Prostate gland (tissue), 2 donors: ENCODE measurements at regions of chr6 and their contacts with region 1.

Region 1: GRCh38 chr6:110873981-110874879 is at the start of gene AMD1:
- DNase-seq: peak; percentile 99
- H3K4me3 ChIP-seq: peak within 1 kb of the TSS; percentile 91 to 94
- H3K27ac ChIP-seq: peak within 1 kb of the TSS; percentile 96
- H3K4me1 ChIP-seq: no peaks in the 10 kb centered on the region
- H3K27me3 ChIP-seq: no peaks in the 10 kb centered on the region
- CTCF ChIP-seq: peak in 2 of 4 experiments; percentile 30 to 34
- POLR2A ChIP-seq: peak; percentile 98
- total RNA-seq, gene AMD1: 286 to 504 TPM

Region 2: DNA sequence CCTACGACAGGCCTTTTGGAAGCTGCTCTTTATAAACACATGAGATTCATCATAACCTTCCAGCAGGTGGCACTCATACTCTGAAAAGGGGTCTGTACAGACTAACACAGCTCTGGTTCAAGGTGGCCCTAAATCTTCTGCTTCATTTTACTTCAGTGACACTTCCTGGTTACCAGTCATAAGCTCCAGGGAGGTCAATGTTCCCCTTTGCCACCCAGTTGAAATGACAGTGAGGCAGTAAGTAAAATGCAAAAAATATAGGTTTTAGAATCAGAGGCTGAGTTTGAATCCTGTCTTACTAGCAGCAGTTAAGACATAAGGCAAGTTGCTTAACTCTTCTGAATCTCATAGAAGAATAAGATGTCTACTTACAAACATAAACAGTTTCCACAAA is 191.8 kb before region 1 on chr6:
- intact Hi-C with region 1: loop called (anchors 5 kb)
- DNase-seq: peak; percentile 86
- H3K4me3 ChIP-seq: no peak overlapping the region
- H3K27ac ChIP-seq: peak overlapping the region; percentile 76 to 83
- H3K4me1 ChIP-seq: no peaks in the 10 kb centered on the region
- H3K27me3 ChIP-seq: no peaks in the 10 kb centered on the region
- CTCF ChIP-seq: peak; percentile 55 to 86 (median 82)
- POLR2A ChIP-seq: no peak

Region 3: DNA sequence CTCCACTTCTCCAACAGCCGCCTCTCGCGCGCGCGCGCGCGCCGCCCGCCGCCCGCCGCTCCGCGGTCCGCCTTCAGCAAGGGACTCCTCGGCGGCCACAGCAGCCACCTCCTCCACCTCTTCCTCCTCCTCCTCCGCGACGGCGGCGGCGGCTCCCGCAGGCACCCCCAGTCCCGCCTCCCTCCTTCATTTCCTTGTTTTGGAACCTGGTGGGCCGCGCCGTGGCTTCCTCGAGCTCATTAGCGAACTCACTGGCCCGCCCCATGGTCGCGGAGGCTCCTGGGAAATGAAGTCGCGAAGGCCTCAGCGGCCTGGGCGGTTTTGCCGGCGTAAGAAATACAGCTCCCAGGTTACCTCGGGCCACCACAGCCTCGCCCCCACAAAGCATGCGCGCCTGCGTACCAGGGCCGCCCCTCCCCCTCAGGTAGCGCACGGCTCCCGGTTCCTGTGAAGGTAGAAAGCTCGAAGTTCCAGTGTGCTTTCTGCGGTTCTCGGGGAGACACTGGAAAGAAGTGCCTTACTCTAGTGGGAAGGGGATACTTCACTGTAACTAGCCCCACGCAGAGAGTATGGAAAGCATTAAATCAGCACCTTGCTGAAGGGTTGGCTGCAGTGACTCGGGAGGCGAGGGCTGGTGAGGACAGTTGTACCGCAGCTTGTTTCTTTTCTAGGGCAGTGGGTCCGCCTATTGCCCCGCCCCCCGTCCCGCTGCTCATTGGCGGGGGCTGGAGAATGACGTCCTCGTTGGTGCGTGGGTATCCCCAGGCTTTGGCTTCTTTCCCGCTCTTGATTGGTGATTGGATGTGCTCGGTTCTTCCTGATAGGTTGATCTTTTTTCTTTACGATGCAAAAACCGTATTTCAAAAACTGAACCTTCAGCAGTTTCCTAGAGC is 58.8 kb before region 1 on chr6 and contains the start of gene CDK19:
- intact Hi-C with region 1: loop called (anchors 2 kb)
- DNase-seq: peak; percentile 99
- H3K4me3 ChIP-seq: peak within 1 kb of the TSS; percentile 96
- H3K27ac ChIP-seq: peak within 1 kb of the TSS; percentile 95 to 96
- H3K4me1 ChIP-seq: no peaks in the 10 kb centered on the region
- H3K27me3 ChIP-seq: no peaks in the 10 kb centered on the region
- CTCF ChIP-seq: peak in 1 of 4 experiments; percentile 32
- POLR2A ChIP-seq: peak; percentile 83
- total RNA-seq, gene CDK19: 41.4 to 70.2 TPM

Region 4: GRCh38 chr6:110958329-110959192 is 84.3 kb after region 1 on chr6 and contains the start of gene GTF3C6:
- intact Hi-C with region 1: loop called (anchors 10 kb)
- DNase-seq: peak; percentile 92
- H3K4me3 ChIP-seq: peak within 1 kb of the TSS; percentile 69 to 91
- H3K27ac ChIP-seq: peak within 1 kb of the TSS; percentile 84 to 92
- H3K4me1 ChIP-seq: no peaks in the 10 kb centered on the region
- H3K27me3 ChIP-seq: no peaks in the 10 kb centered on the region
- CTCF ChIP-seq: peak in 1 of 4 experiments; percentile 17
- POLR2A ChIP-seq: peak; percentile 73
- total RNA-seq, gene GTF3C6: 72.0 to 98.1 TPM